ENCODE measurements at regions of chr4 and their contacts with region 1.

Region 1: GRCh38 chr4:145148980-145149379 is 31.4 kb downstream of the OTUD4 start:
- DNase-seq: no peak
- ATAC-seq: no peak
- H3K4me3 ChIP-seq: no peak overlapping the region
- H3K27ac ChIP-seq: no peak overlapping the region
- H3K4me1 ChIP-seq: no peaks in the 10 kb centered on the region
- H3K27me3 ChIP-seq: no peaks in the 10 kb centered on the region
- CTCF ChIP-seq: no peak
- POLR2A ChIP-seq: no peak
- RAD21 ChIP-seq: no peak

Region 2: DNA sequence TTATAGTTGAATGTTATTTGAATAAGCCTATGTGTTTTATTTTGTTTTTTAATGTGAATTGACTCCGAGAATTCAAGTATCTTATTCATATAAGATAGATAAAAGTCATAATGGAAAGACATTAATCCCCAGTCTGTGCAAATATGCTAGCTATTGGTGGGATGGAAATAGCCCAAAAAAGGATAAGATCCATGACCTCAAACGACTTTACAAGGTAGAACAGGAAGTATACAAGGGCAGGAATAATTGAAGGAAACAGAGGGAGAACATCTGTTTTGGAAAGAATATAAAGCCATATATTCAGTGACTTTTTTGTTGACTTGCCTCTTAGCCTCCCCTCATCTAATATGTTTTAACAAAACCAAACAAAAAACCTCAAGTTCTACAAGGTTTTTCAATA is 41.9 kb before region 1 on chr4:
- CTCF ChIA-PET with region 1: no interaction called
- POLR2A ChIA-PET with region 1: no interaction called
- dilution Hi-C with region 1: no loop called
- in situ Hi-C with region 1: no loop called
- intact Hi-C with region 1: loop called (anchors 5 kb)
- DNase-seq: no peak
- ATAC-seq: no peak
- H3K4me3 ChIP-seq: no peak overlapping the region
- H3K27ac ChIP-seq: no peak overlapping the region
- H3K4me1 ChIP-seq: no peaks in the 10 kb centered on the region
- H3K27me3 ChIP-seq: no peaks in the 10 kb centered on the region
- CTCF ChIP-seq: no peak
- POLR2A ChIP-seq: no peak
- RAD21 ChIP-seq: no peak

Region 3: DNA sequence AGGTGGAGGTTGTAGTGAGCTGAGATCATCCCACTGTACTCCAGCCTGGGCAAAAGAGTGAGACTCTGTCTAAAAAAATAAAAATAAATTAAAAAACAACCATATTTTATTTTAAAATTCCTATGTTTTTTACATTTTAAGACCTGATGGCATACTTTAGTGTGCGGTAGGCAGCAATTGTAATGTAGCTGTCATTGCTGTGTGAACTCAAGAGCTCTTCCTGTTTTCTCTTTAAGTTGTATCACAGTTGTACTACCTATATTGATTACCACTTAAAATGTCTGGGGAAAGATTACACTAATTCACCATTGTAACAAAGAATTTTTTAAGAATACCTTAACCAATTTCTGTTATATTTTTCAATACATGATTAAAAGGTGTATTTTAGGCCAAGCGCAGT is 23.6 kb before region 1 on chr4:
- CTCF ChIA-PET with region 1: no interaction called
- POLR2A ChIA-PET with region 1: no interaction called
- dilution Hi-C with region 1: no loop called
- in situ Hi-C with region 1: no loop called
- intact Hi-C with region 1: loop called (anchors 2 kb)
- DNase-seq: no peak
- ATAC-seq: no peak
- H3K4me3 ChIP-seq: no peak overlapping the region
- H3K27ac ChIP-seq: no peak overlapping the region
- H3K4me1 ChIP-seq: no peaks in the 10 kb centered on the region
- H3K27me3 ChIP-seq: no peaks in the 10 kb centered on the region
- CTCF ChIP-seq: no peak
- POLR2A ChIP-seq: no peak
- RAD21 ChIP-seq: no peak

Region 4: GRCh38 chr4:145420595-145421214 is 271.7 kb after region 1 on chr4:
- CTCF ChIA-PET with region 1: no interaction called
- POLR2A ChIA-PET with region 1: no interaction called
- dilution Hi-C with region 1: no loop called
- in situ Hi-C with region 1: no loop called
- intact Hi-C with region 1: no loop called
- DNase-seq: no peak
- ATAC-seq: no peak
- H3K4me3 ChIP-seq: no peak overlapping the region
- H3K27ac ChIP-seq: no peak overlapping the region
- H3K4me1 ChIP-seq: no peaks in the 10 kb centered on the region
- H3K27me3 ChIP-seq: no peaks in the 10 kb centered on the region
- CTCF ChIP-seq: no peak
- POLR2A ChIP-seq: no peak
- RAD21 ChIP-seq: no peak

Measured in IMR-90 (cell line).